ENCODE measurements at regions of chr18 and their contacts with region 1.

Region 1: GRCh38 chr18:68623342-68623741 is 91.6 kb downstream of the TMX3 start:
- DNase-seq: peak; percentile 48
- ATAC-seq: no peak
- H3K4me3 Mint-ChIP-seq: no peak overlapping the region
- H3K27ac Mint-ChIP-seq: no peak overlapping the region
- H3K4me1 Mint-ChIP-seq: no peaks in the 10 kb centered on the region
- H3K27me3 Mint-ChIP-seq: peaks cover 4% of the 10 kb centered on the region

Region 2: GRCh38 chr18:67331857-67332256 is 1291.5 kb before region 1 on chr18:
- CTCF ChIA-PET with region 1: no interaction called
- POLR2A ChIA-PET with region 1: no interaction called
- intact Hi-C with region 1: loop called in 1 of 2 experiments (anchors 5 kb)
- DNase-seq: no peak
- ATAC-seq: no peak
- H3K4me3 Mint-ChIP-seq: no peak overlapping the region
- H3K27ac Mint-ChIP-seq: no peak overlapping the region
- H3K4me1 Mint-ChIP-seq: no peaks in the 10 kb centered on the region
- H3K27me3 Mint-ChIP-seq: peaks cover 5% of the 10 kb centered on the region

Region 3: GRCh38 chr18:68948622-68949021 is 325.3 kb after region 1 on chr18:
- CTCF ChIA-PET with region 1: no interaction called
- POLR2A ChIA-PET with region 1: no interaction called
- intact Hi-C with region 1: no loop called
- DNase-seq: no peak
- ATAC-seq: no peak
- H3K4me3 Mint-ChIP-seq: no peak overlapping the region
- H3K27ac Mint-ChIP-seq: no peak overlapping the region
- H3K4me1 Mint-ChIP-seq: no peaks in the 10 kb centered on the region
- H3K27me3 Mint-ChIP-seq: no peaks in the 10 kb centered on the region

Measured in activated CD4-positive, alpha-beta T cell treated with anti-CD3 and anti-CD28 coated beads for 36 hours (primary cell).